ENCODE measurements at regions of chr12 and their contacts with region 1.

Region 1: DNA sequence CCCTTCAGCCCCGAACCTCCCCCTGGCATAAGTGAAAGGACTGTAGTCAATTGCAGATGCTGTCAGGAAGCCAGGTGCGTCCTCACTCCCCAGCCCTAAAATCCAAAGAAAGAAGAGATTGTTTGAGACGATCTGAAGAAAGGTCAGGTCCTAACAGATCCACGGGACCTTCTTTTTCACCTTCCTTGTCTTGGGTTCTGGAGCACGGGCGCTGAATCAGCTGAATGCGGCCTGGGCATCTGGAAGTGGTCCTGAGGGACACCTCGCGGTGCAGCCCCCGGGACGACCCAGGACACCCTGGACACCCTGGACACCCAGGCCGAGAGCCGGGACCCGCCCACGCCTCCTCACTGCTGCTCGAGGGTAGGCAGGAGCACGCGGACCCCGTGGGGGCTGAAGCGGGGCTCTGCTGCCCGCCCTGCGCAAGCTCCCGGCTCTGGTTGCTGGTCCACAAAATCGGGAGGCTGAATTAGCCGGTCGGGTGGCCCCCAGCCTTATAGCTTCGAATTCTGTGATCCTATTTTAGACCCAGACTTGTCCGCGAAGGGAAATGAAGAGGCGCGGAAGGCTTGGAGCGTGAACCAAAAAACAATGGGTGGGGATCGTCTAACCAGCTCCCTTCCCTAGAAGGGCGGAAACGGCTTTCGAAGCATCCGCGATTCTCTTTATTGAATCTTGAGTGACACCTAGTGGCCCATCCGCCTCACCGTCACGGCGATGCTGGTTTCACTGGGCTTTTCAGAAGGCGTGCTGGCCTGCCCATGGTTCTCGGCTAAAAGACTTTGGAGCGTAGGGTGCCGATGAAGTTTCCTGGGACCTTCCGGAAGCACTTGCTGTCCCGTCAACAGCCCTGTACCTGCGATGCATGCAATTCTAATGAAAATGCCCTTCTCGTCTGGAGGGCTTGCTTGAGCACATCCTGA is 46.4 kb upstream of the PLXNC1 start:
- DNase-seq: peak; percentile 39 to 94
- H3K4me3 ChIP-seq: peak overlapping the region; percentile 63 to 67
- H3K27ac ChIP-seq: peak overlapping the region; percentile 1 to 47
- H3K4me1 ChIP-seq: peaks cover 0 to 4% of the 10 kb centered on the region in 2 donors
- H3K27me3 ChIP-seq: no peaks in the 10 kb centered on the region
- CTCF ChIP-seq: peak; percentile 71 to 87 (median 71)

Region 2: DNA sequence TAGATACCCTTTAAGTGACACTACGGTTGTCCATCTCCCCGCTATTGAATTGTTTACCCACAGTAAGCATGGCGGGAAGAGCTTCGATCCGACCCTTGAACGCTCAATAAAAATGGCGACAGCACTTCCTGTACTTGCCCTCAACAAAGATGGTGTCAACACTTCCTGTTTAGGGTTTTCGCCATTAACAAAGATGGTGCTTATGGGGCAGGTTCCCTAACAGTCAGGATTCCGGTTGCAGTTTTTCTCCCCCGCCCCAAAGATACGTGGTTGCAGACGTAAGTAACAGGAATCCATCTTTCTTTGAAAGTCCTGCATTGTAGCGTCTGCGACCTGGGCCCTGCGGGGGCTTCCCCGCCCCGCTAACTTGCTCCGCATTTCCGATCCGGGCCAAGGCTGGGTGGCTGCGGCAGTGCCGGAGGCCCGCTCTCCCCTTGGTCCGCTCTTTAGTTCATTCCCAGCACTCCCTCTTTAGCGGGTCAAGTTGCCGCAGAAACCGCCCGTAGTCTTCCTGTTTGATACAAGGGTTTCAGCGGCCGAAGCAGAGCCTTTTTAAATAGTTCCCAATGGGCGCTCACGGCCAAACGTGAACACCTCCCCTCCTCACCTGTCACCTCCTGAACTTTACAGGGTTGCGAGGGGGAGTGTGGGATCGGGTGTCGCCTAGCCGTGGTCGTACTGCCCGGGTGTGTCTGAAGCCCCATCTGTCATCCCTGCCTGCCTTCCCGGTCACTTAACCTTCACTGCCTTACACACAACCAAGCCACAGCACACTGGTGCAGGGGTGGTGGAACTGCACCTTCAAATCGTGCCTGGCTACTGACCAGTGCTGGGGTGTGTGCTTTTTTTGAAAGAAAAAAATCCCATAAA is 424.6 kb before region 1 on chr12 and contains the start of gene CRADD:
- intact Hi-C with region 1: loop called (anchors 1 kb)
- DNase-seq: peak; percentile 53 to 93
- H3K4me3 ChIP-seq: peak within 1 kb of the TSS; percentile 74 to 84
- H3K27ac ChIP-seq: peak within 1 kb of the TSS; percentile 98 to 99
- H3K4me1 ChIP-seq: peaks cover 0 to 24% of the 10 kb centered on the region in 2 donors
- H3K27me3 ChIP-seq: no peaks in the 10 kb centered on the region
- CTCF ChIP-seq: no peak
- total RNA-seq, gene CRADD: not detected

Region 3: DNA sequence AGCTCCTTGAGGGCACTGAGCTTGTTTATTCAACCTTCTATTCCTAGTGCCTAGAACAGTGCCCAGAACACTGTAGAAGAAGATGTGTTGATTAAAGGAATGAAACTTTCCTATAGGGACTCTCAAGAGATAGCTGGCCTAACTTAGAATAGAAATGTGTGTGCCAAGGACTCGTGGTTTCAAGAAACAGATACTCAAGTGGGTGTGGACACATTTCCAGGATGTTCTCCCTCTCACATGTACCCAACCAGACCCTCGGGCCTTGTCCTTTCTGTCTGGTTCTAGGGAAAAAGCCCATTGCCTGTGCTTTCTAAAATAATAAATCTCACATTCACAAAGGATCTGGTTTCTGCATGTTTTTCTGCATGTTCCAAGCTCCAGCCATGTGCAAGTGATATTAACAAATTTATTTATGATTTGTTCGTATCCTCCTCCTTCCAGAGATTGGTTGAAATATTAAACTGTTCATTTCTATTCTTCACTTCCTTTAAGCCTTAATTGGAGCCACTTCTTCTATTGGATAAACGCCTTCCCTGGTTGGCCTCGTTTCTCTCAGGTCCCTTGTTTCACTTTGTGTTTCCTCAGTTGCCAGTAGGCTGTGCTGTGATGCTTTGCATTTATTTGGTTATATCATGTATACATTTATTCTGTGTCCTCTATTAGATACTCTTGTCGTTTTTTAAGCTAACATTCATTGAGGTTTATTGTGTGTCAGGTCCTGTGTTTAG is 335.0 kb before region 1 on chr12:
- intact Hi-C with region 1: loop called (anchors 1 kb)
- DNase-seq: peak in 1 of 2 donors; percentile 72
- H3K4me3 ChIP-seq: peak overlapping the region; percentile 5 to 26
- H3K27ac ChIP-seq: peak overlapping the region; percentile 6 to 31
- H3K4me1 ChIP-seq: peaks cover 3 to 4% of the 10 kb centered on the region in 2 donors
- H3K27me3 ChIP-seq: no peaks in the 10 kb centered on the region
- CTCF ChIP-seq: peak; percentile 42 to 65 (median 59)

Region 4: GRCh38 chr12:93894391-93895088 is 207.5 kb before region 1 on chr12:
- intact Hi-C with region 1: loop called (anchors 2 kb)
- DNase-seq: peak; percentile 57 to 94
- H3K4me3 ChIP-seq: peak overlapping the region in 1 of 2 donors; percentile 2
- H3K27ac ChIP-seq: peak overlapping the region; percentile 73 to 75
- H3K4me1 ChIP-seq: peaks cover 4 to 17% of the 10 kb centered on the region in 2 donors
- H3K27me3 ChIP-seq: no peaks in the 10 kb centered on the region
- CTCF ChIP-seq: no peak

Region 5: DNA sequence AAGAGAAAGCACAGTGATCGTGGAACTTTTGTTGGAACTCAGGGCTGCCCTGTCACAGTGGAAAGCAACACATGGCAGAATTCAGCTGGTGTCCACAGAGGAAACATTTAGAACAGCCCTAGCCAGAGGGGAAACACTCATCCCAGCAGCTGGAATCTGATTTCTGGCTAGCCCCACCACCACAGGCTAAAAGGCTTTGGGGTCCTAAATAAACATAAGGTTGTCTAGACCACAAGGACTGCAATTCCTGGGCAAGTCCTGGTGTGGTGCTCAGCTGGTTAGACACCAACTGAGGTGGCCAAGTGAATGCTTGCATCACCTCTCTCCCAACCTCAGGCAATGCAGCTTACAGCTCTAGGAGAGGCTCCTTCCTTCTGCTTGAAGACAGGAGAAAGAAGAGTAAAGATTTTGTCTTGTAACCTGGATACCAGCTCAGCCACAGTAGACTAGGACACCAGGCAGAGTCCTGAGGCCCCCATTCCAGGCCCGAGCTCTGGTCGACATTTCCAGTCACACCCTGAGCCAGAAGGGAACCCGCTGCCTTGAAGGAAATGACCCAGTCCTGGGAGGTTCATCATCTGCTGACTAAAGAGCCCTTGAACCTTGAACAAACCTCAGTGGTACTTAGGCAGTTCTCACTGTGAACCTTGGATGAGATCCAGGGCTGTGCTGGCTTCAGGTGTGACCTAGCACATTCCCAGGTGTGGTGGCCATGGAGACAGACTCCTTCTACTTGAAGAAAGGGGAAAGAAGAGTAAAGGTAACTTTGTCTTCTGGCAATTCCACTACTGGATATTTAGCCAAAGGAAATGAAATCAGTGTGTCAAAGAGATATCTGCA is 39.0 kb before region 1 on chr12:
- intact Hi-C with region 1: no loop called
- DNase-seq: no peak
- H3K4me3 ChIP-seq: no peak overlapping the region
- H3K27ac ChIP-seq: no peak overlapping the region
- H3K4me1 ChIP-seq: no peaks in the 10 kb centered on the region
- H3K27me3 ChIP-seq: no peaks in the 10 kb centered on the region
- CTCF ChIP-seq: no peak

Measured in ascending aorta (tissue), 2 donors.